ENCODE measurements at regions of chr1 and their contacts with region 1.

Region 1: GRCh38 chr1:226626577-226626956 is 78.0 kb downstream of the STUM start:
- DNase-seq: peak; percentile 91
- ATAC-seq: peak; percentile 82
- H3K4me3 Mint-ChIP-seq: peak overlapping the region; percentile 46
- H3K27ac Mint-ChIP-seq: peak overlapping the region; percentile 90
- H3K4me1 Mint-ChIP-seq: peaks cover 26% of the 10 kb centered on the region
- H3K27me3 Mint-ChIP-seq: no peaks in the 10 kb centered on the region

Region 2: GRCh38 chr1:226662642-226663326 is 36.2 kb after region 1 on chr1:
- CTCF ChIA-PET with region 1: interaction called, 6 read pairs
- POLR2A ChIA-PET with region 1: no interaction called
- intact Hi-C with region 1: loop called in 1 of 2 experiments (anchors 1 kb)
- DNase-seq: peak; percentile 91
- ATAC-seq: peak; percentile 93
- H3K4me3 Mint-ChIP-seq: peak overlapping the region; percentile 53
- H3K27ac Mint-ChIP-seq: peak overlapping the region; percentile 94
- H3K4me1 Mint-ChIP-seq: no peaks in the 10 kb centered on the region
- H3K27me3 Mint-ChIP-seq: no peaks in the 10 kb centered on the region

Region 3: GRCh38 chr1:226702957-226703831 is 76.6 kb after region 1 on chr1:
- CTCF ChIA-PET with region 1: interaction called, 12 read pairs
- POLR2A ChIA-PET with region 1: no interaction called
- intact Hi-C with region 1: no loop called
- DNase-seq: peak; percentile 90
- ATAC-seq: peak; percentile 61
- H3K4me3 Mint-ChIP-seq: peak overlapping the region; percentile 84
- H3K27ac Mint-ChIP-seq: peak overlapping the region; percentile 97
- H3K4me1 Mint-ChIP-seq: peaks cover 85% of the 10 kb centered on the region
- H3K27me3 Mint-ChIP-seq: no peaks in the 10 kb centered on the region

Region 4: GRCh38 chr1:226723657-226724532 is 97.3 kb after region 1 on chr1:
- CTCF ChIA-PET with region 1: no interaction called
- POLR2A ChIA-PET with region 1: no interaction called
- intact Hi-C with region 1: no loop called
- DNase-seq: no peak
- ATAC-seq: peak; percentile 24
- H3K4me3 Mint-ChIP-seq: peak overlapping the region; percentile 88
- H3K27ac Mint-ChIP-seq: peak overlapping the region; percentile 97
- H3K4me1 Mint-ChIP-seq: peaks cover 92% of the 10 kb centered on the region
- H3K27me3 Mint-ChIP-seq: no peaks in the 10 kb centered on the region

Region 5: GRCh38 chr1:226827968-226828513 is 201.5 kb after region 1 on chr1:
- CTCF ChIA-PET with region 1: interaction called, 33 read pairs
- POLR2A ChIA-PET with region 1: no interaction called
- intact Hi-C with region 1: loop called (anchors 1 kb)
- DNase-seq: peak; percentile 99
- ATAC-seq: peak; percentile 99
- H3K4me3 Mint-ChIP-seq: peak overlapping the region; percentile 44
- H3K27ac Mint-ChIP-seq: peak overlapping the region; percentile 94
- H3K4me1 Mint-ChIP-seq: peaks cover 41% of the 10 kb centered on the region
- H3K27me3 Mint-ChIP-seq: no peaks in the 10 kb centered on the region

Region 6: DNA sequence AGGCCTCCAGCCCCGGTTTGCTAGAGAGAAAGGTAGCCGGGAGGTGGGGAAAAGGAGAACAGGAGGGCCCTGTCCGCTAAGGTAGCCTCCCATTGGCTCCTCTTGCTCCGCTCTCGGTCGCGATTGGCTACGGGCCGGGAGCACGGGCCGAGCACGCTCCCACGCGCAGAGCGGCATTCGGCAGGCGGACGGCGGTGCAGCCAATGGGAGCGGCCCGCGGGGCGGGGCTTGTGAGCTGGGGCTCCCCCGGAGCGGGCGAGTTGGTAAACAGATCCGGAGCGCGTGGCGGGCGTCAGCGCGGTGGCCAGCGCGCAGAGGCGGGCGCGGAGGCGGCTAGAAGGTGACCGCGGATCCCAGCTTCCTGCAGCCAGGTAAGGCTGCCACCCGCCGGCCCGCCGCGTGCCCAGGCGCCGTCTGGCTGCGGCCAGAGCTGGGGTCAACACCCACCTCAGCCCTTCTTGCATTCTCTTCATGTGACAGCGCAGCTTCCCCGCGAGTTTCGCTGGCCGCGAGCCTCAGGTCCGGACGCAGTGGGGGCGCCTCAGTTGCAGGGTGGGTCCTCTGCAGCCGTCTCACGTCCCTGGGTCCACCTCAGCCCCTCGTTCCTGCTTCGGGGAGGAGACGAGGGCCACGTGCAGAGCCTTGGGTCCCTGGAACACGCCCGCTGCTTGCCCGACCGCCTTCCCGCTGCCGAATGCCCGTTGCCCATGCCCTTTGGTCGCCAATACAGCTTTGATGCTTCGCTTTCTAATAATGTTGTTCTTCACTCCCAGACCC is 313.6 kb after region 1 on chr1 and contains the start of gene COQ8A:
- CTCF ChIA-PET with region 1: interaction called, 4 read pairs
- POLR2A ChIA-PET with region 1: interaction called, 6 read pairs
- intact Hi-C with region 1: loop called in 1 of 2 experiments (anchors 1 kb)
- DNase-seq: peak; percentile 100
- ATAC-seq: peak; percentile 97
- H3K4me3 Mint-ChIP-seq: peak within 1 kb of the TSS; percentile 82
- H3K27ac Mint-ChIP-seq: peak within 1 kb of the TSS; percentile 96
- H3K4me1 Mint-ChIP-seq: peaks cover 53% of the 10 kb centered on the region
- H3K27me3 Mint-ChIP-seq: no peaks in the 10 kb centered on the region
- total RNA-seq, gene COQ8A: 21.3 to 26.9 TPM

Region 7: DNA sequence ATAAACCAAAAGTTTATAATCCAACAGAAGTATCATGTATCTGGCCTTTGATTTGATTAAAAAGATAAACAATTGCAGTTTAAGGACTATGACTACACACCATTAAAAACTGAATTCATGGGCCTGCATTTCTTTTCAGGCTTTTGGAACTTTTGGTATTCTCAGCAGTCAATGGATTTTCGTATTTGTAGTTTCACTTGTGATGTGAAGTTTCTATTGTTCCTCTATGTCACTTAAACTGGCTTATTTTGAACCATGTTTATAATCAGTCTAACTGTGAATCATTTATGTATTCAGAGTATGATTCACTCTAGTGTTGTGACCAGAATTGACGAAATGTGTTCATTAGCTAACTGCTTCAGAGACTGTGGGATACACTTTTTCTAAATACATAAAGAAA is 446.4 kb after region 1 on chr1:
- CTCF ChIA-PET with region 1: no interaction called
- POLR2A ChIA-PET with region 1: no interaction called
- intact Hi-C with region 1: loop called in 1 of 2 experiments (anchors 10 kb)
- DNase-seq: no peak
- ATAC-seq: peak; percentile 95
- H3K4me3 Mint-ChIP-seq: no peak overlapping the region
- H3K27ac Mint-ChIP-seq: no peak overlapping the region
- H3K4me1 Mint-ChIP-seq: peaks cover 5% of the 10 kb centered on the region
- H3K27me3 Mint-ChIP-seq: peaks cover 3% of the 10 kb centered on the region

Region 8: DNA sequence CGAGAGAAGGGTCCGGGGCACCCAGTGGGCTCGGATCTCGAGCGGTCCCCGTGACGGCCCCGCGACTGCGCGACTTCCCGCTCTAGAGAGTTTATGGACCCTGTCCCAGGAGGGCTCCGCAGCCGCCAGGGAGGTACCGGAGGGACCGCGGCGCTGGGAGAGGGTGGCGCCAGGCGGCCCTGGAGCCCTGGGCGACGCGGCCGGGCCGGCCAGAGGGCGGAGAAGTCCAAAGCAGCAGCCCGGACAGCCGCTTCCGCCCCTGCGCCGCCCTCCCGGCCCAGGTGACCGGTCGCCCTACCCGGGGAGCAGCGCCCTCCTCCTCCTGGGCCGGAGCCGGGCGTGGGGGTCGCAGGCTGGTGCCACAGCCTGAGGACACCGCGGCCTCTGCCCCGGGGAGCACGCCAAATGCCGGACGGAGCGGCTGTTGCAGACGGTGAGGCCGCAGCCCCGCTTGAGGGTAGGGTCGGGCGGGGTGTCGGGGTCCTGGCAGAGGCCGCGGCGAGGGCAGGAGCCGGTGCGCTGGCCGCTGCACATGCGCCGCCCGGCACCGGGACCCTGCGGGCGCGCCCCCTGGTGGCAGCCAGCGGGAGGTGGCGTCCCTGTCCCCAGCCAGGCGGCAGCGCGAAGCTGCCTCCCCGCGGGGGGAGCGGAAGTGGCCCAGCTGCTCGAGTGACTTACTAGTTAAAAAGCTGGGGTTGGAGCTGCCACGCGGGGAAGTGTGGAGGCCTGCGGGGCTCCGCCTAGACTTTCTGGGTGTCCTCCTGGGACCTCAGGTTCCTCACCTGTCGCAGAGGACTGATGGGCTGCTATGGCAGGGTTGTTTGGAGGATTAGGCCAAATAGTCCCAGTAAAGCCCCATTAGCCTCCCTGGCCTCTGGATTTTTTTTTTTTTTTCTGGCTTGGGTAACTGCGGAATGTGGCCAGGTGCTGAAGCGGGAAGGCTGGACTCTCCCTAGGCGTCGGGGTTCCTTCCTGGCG is 915.9 kb after region 1 on chr1:
- CTCF ChIA-PET with region 1: no interaction called
- POLR2A ChIA-PET with region 1: no interaction called
- intact Hi-C with region 1: loop called in 1 of 2 experiments (anchors 10 kb)
- DNase-seq: peak; percentile 95
- ATAC-seq: peak; percentile 97
- H3K4me3 Mint-ChIP-seq: peak overlapping the region; percentile 47
- H3K27ac Mint-ChIP-seq: peak overlapping the region; percentile 72
- H3K4me1 Mint-ChIP-seq: peaks cover 4% of the 10 kb centered on the region
- H3K27me3 Mint-ChIP-seq: no peaks in the 10 kb centered on the region

Measured in activated CD4-positive, alpha-beta T cell treated with anti-CD3 and anti-CD28 coated beads for 36 hours (primary cell).